ENCODE measurements at regions of chr10 and their contacts with region 1.

Region 1: DNA sequence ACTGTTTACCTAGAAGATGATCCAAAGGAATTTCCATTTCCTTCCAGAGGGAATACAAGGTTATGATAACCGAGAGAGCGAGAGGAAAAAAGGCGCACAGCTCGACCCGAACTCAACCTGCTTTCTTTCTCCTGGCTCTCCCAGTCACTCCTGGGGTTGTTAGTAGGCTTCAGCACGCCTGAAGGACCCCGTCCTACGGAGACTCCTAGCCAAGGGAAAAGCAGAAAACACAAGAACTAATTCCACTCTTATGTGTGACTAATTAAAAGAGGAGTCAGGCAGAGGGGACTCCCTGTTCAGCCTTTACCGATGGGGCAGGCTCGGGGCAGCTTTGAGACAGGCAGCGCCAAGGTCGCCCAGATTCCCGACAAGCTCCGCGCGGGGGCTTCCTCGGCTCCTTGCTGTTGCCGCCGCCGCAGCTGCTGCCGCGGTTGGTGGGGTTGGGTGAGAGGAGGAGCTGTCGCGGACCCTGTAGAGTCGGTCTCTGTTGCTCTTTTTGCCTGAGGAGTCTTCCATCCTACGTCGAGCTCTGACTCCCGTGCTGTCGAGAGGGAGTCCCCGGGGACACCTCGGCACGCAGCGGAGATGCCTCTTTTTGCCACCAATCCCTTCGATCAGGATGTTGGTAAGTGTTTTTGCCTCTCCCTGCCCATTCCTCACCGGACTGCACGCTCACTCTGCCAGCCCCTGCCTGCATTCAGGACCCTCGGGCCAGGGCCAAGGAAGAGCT is at the start of gene STAM:
- DNase-seq: peak; percentile 88 to 96 (median 91)
- ATAC-seq: peak; percentile 88
- H3K4me3 ChIP-seq: peak within 1 kb of the TSS; percentile 75
- H3K4me3 Mint-ChIP-seq: peak within 1 kb of the TSS; percentile 98
- H3K27ac ChIP-seq: peak within 1 kb of the TSS; percentile 96
- H3K27ac Mint-ChIP-seq: peak within 1 kb of the TSS; percentile 100
- H3K4me1 ChIP-seq: peaks cover 41% of the 10 kb centered on the region
- H3K4me1 Mint-ChIP-seq: peaks cover 60% of the 10 kb centered on the region
- H3K27me3 ChIP-seq: no peaks in the 10 kb centered on the region
- H3K27me3 Mint-ChIP-seq: no peaks in the 10 kb centered on the region
- CTCF ChIP-seq: no peak
- total RNA-seq, gene STAM: 52.4 to 53.3 TPM

Region 2: DNA sequence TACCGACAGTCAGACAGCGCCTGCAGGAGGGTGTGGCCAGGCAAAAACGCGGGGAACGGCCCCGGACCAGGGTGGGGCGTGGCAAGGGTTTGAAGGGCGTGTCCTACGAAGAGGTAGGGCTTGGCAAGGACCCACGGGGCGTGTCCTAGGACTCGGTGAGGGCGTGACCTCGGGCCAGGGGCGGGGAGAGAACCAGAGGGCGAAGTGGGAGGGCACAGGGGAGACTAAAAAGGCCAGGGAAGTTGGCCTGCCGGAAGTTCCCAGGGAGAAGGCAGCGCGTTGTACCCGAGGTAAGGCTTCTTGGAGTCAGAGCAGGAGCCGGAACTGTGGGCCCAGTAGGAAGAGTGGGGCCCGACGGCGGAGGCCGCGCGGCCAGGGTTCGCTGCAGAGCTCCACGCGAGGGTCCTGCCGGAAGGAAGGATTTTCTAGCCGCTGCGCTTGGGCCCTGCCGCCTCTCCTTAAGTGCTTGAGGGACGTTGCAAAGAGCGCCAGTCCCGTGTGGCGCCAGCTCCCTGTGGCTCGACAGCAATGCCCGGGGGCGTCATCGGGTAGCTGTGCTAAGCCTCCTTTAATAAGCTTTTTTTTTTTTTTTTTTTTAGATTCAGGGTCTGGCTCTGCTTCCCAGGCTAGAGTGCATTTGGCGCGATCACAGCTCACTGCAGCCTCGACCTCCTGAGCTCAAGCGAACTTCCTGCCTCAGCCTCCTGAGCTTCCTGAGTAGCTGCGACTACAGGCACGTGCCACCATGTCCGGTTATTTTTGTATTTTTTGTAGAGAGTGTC is 1207.0 kb before region 1 on chr10 and contains the start of gene PTER:
- CTCF ChIA-PET with region 1: no interaction called
- POLR2A ChIA-PET with region 1: interaction called, 6 read pairs
- intact Hi-C with region 1: loop called in 1 of 2 experiments (anchors 5 kb)
- DNase-seq: peak; percentile 95 to 99 (median 97)
- ATAC-seq: peak; percentile 98
- H3K4me3 ChIP-seq: peak within 1 kb of the TSS; percentile 68
- H3K4me3 Mint-ChIP-seq: peak within 1 kb of the TSS; percentile 91
- H3K27ac ChIP-seq: peak within 1 kb of the TSS; percentile 57 to 81
- H3K27ac Mint-ChIP-seq: peak within 1 kb of the TSS; percentile 80
- H3K4me1 ChIP-seq: peaks cover 47% of the 10 kb centered on the region
- H3K4me1 Mint-ChIP-seq: peaks cover 47% of the 10 kb centered on the region
- H3K27me3 ChIP-seq: no peaks in the 10 kb centered on the region
- H3K27me3 Mint-ChIP-seq: no peaks in the 10 kb centered on the region
- CTCF ChIP-seq: no peak
- total RNA-seq, gene PTER: 8.2 to 9.7 TPM

Region 3: GRCh38 chr10:17617031-17617911 is 26.6 kb before region 1 on chr10 and contains the start of gene HACD1:
- CTCF ChIA-PET with region 1: interaction called, 3 read pairs
- POLR2A ChIA-PET with region 1: interaction called, 19 read pairs
- intact Hi-C with region 1: no loop called
- DNase-seq: peak in 13 of 14 experiments; percentile 5 to 68 (median 37)
- ATAC-seq: peak; percentile 73
- H3K4me3 ChIP-seq: peak within 1 kb of the TSS; percentile 66
- H3K4me3 Mint-ChIP-seq: peak within 1 kb of the TSS; percentile 92
- H3K27ac ChIP-seq: no peak within 1 kb of the TSS
- H3K27ac Mint-ChIP-seq: no peak within 1 kb of the TSS
- H3K4me1 ChIP-seq: peaks cover 13% of the 10 kb centered on the region
- H3K4me1 Mint-ChIP-seq: peaks cover 6% of the 10 kb centered on the region
- H3K27me3 ChIP-seq: peaks cover 0 to 5% of the 10 kb centered on the region in 2 experiments
- H3K27me3 Mint-ChIP-seq: peaks cover 18% of the 10 kb centered on the region
- CTCF ChIP-seq: no peak
- total RNA-seq, gene HACD1: 0.75 to 0.77 TPM

Region 4: GRCh38 chr10:17655567-17656146 is 11.7 kb after region 1 on chr10:
- CTCF ChIA-PET with region 1: interaction called, 3 read pairs
- POLR2A ChIA-PET with region 1: interaction called, 19 read pairs
- intact Hi-C with region 1: no loop called
- DNase-seq: peak in 3 of 14 experiments; percentile 38 to 52 (median 47)
- ATAC-seq: peak; percentile 54
- H3K4me3 ChIP-seq: peak overlapping the region; percentile 15
- H3K4me3 Mint-ChIP-seq: peak overlapping the region; percentile 22
- H3K27ac ChIP-seq: peak overlapping the region in 1 of 2 donors; percentile 46
- H3K27ac Mint-ChIP-seq: peak overlapping the region; percentile 61
- H3K4me1 ChIP-seq: peaks cover 10% of the 10 kb centered on the region
- H3K4me1 Mint-ChIP-seq: peaks cover 74% of the 10 kb centered on the region
- H3K27me3 ChIP-seq: no peaks in the 10 kb centered on the region
- H3K27me3 Mint-ChIP-seq: no peaks in the 10 kb centered on the region
- CTCF ChIP-seq: no peak

Region 5: DNA sequence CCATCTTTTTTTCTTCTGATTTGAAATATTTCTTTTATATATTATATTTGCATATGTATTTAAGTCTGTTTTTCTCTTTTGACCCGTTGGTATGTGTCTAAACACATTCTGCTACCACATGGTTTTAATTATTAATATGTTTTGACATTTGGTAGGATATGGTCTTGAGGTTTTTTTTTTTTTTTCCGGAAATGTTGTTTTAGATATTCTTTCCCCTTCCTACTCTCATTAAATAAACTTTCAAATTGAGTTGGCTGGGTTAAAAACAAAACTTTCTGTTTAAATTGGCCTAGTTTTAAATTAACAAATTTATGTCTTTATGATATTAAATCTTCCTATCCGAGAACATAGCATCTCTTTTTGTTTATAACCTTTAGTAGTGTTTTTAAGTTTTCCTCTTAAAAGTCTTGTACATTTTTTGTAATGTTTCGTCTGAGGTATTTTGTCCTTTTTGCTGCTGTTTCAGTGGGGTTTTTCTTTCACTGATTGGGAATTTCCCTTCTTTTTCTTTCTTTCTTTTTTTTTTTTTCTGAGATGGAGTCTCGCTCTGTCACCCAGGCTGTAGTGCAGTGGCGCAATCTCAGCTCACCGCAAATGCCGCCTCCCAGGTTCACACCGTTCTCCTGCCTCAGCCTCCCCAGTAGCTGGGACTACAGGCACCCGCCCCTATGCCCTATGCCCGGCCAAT is 25.4 kb after region 1 on chr10:
- CTCF ChIA-PET with region 1: interaction called, 6 read pairs
- POLR2A ChIA-PET with region 1: interaction called, 5 read pairs
- intact Hi-C with region 1: loop called in 1 of 2 experiments (anchors 2 kb)
- DNase-seq: peak in 8 of 14 experiments; percentile 13 to 80 (median 40)
- ATAC-seq: peak; percentile 51
- H3K4me3 ChIP-seq: peak overlapping the region; percentile 35
- H3K4me3 Mint-ChIP-seq: peak overlapping the region; percentile 80
- H3K27ac ChIP-seq: peak overlapping the region; percentile 10 to 23
- H3K27ac Mint-ChIP-seq: peak overlapping the region; percentile 67
- H3K4me1 ChIP-seq: peaks cover 5% of the 10 kb centered on the region
- H3K4me1 Mint-ChIP-seq: peaks cover 80% of the 10 kb centered on the region
- H3K27me3 ChIP-seq: no peaks in the 10 kb centered on the region
- H3K27me3 Mint-ChIP-seq: no peaks in the 10 kb centered on the region
- CTCF ChIP-seq: no peak

Region 6: DNA sequence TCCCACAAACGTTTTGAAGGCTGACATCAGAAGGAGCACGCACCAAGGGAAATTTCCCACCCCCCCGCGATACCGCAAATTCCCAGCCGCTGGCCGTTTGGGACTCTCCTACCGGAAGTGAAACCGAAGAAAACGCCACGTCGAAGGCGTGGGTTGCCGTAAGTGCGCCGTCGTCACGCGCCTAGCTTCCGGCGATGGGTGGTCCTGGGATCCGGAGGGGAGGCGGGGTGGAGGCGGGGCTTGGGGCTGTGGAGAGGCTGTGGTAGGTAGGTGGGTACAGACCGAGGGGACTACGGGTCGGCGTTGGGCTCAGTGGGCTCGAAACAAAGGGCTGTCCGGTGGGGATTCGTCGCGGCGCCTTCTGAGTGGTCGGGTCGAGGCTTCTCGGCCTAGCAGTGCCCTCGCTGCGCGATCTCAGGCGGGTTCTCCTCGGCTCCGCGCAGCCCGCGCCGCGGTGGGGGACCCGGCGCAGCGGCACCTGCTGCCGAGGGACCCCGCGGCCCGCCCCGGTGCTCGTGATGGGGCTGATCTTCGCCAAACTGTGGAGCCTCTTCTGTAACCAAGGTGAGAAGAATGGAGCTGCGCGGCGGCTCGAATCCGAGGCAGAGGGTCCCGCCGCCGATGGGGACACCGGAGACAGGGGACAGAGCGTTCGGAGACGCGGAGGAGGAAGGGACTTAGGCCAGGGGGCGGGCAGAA is 1015.3 kb after region 1 on chr10 and contains the start of gene ARL5B:
- CTCF ChIA-PET with region 1: no interaction called
- POLR2A ChIA-PET with region 1: interaction called, 9 read pairs
- intact Hi-C with region 1: loop called in 1 of 2 experiments (anchors 10 kb)
- DNase-seq: peak; percentile 91 to 99 (median 96)
- ATAC-seq: peak; percentile 93
- H3K4me3 ChIP-seq: peak within 1 kb of the TSS; percentile 79
- H3K4me3 Mint-ChIP-seq: peak within 1 kb of the TSS; percentile 100
- H3K27ac ChIP-seq: peak within 1 kb of the TSS; percentile 94 to 97
- H3K27ac Mint-ChIP-seq: peak within 1 kb of the TSS; percentile 100
- H3K4me1 ChIP-seq: peaks cover 19% of the 10 kb centered on the region
- H3K4me1 Mint-ChIP-seq: peaks cover 50% of the 10 kb centered on the region
- H3K27me3 ChIP-seq: no peaks in the 10 kb centered on the region
- H3K27me3 Mint-ChIP-seq: no peaks in the 10 kb centered on the region
- CTCF ChIP-seq: no peak
- total RNA-seq, gene ARL5B: 12.4 to 13.3 TPM

Measured in CD4-positive, alpha-beta T cell (primary cell).